ENCODE measurements at regions of chr9 and their contacts with region 1.

Region 1: DNA sequence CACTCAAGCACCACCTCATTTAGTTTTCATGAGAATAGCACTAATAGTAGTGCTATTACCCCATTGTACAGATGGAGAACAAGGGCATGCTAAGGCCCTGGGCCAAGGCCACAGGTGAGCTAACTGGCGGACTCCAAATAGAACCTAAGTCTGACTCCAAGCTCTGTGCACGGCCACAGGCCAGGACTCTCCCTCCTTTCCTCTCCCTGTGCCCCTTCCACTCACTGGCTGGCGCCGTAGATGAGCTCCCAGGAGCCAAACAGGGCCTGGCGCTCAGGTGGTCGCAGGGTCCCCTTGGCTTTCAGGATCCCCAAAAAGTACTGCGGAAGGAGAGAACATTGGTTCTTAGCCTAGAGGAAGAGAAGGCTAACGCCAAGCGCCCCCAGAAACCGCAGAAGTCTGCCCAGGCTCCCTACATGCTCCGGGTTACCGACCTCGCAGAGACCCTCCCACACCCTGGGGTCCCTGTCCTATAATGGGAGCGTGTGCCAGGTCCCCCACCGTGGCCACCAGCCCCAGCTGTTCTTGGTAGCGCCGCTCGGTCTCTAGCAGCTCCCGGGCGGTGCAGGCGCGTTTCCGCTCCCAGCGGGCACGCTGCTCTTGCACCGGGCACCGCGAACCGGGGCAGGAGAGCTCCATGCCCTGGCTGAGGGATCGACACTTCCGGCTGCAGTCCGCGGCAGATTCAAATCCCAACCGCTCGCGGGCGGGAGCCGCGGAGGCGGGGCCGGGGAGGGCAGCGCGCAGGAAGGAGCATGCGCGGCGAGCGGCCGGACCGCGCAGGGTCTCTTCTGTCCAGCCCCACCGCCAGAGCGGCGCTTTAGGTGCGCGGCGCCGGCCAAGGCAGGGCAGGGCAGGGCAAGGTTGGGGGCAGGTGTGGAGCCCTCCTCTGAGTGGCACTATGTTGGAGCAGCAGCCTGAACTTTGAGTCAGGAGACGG is at the start of gene ARHGEF39:
- DNase-seq: peak; percentile 87 to 92 (median 88)
- ATAC-seq: peak; percentile 96
- H3K4me3 ChIP-seq: peak within 1 kb of the TSS; percentile 81
- H3K27ac ChIP-seq: peak within 1 kb of the TSS; percentile 92
- H3K4me1 ChIP-seq: peaks cover 13 to 22% of the 10 kb centered on the region in 2 experiments
- H3K27me3 ChIP-seq: no peaks in the 10 kb centered on the region
- CTCF ChIP-seq: peak; percentile 41 to 49 (median 44); a peak in 4 of 6 replicates
- EP300 ChIP-seq: no peak
- POLR2A ChIP-seq: peak; percentile 83
- RAD21 ChIP-seq: peak in 1 of 2 experiments; percentile 38; a peak in 1 of 4 replicates
- polyA plus RNA-seq, gene ARHGEF39: 2.8 to 5.5 TPM

Region 2: DNA sequence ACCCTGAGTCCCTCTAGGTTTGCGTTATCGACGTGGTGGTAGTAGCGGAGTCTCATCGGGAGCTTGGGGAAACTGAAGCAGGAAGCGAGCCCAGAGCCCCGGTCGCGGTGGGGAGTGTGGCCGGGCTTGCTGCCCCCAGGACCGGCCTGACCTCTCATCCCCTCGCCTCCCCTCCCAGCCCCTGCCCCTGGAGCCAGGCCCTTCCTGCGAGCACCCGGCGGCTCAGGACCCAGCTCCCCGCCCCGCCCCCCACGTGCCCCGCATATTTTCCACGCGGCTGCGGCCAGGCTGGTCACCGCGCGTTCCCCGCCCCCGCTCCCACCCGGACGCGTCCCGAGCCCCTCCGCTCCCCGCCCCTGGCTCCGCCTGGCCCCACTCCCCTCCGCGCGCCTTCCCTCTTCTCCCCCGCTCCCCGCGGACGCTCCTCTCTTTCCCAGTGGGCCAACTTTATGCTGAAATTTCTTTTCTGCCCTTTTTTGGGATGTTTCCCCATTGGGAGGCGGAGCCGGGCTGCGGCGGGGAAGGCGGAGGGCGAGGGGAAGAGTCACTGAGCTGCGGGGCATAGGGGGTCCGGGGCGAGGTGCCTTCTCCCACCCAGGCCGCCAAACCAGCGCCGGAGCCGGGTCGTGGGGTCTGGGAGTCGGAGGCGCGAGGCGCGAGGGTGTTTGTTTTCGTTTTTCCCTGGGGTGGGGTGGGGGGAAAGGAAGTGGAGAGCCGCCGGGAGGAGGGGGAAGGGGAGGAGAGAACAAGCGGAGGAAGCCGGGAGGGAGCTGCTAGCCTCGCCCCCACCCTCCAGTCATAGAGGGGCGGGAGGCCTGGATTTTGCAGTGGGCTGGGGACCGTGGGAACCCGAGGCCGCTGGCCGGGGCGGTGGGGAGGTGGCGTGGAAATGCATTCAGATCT is 25.9 kb after region 1 on chr9:
- CTCF ChIA-PET with region 1: no interaction called
- POLR2A ChIA-PET with region 1: interaction called, 10 read pairs
- in situ Hi-C with region 1: no loop called
- intact Hi-C with region 1: no loop called
- DNase-seq: peak; percentile 78 to 84 (median 78)
- ATAC-seq: peak; percentile 92
- H3K4me3 ChIP-seq: peak overlapping the region; percentile 72
- H3K27ac ChIP-seq: peak overlapping the region; percentile 86
- H3K4me1 ChIP-seq: peaks cover 12 to 23% of the 10 kb centered on the region in 2 experiments; a peak in 4 of 5 replicates
- H3K27me3 ChIP-seq: no peaks in the 10 kb centered on the region
- CTCF ChIP-seq: no peak
- EP300 ChIP-seq: no peak
- POLR2A ChIP-seq: peak; percentile 73
- RAD21 ChIP-seq: no peak

Region 3: DNA sequence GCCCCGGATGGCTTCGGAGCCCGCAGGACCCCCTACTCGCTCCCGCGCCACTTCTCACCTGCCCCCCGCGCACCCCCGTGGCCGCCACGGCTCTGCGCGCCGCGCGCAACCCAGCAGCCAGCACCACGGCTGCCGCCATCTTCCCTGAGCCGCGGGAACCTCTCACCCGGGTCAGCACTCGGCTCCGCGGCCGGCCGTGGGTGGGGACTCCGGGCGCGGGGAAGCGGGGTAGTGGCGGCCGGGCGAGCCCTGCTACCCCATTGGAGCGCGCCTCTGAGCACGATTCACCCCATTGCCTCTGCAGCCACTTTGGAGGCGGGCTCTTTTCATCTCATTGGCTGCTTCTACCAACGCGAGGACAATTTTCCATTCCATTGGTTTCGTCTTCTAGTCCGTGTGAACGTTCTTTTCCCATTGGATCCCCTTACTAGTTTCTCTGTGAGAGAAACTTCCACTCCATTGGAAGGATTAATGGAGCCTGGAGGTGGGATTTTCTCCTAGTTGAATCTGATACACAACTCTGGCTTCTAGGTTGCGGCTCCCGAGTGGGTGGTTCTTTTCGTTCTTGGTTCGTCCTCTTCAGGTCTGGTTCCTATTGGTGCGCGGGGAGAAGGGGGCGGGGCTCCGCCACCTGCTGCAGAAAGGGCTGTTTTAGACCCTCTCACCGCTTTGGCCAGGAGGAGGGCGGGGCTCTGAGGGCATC is 150.2 kb after region 1 on chr9 and contains the start of gene HINT2:
- CTCF ChIA-PET with region 1: no interaction called
- POLR2A ChIA-PET with region 1: interaction called, 4 read pairs
- in situ Hi-C with region 1: no loop called
- intact Hi-C with region 1: loop called (anchors 10 kb)
- DNase-seq: peak; percentile 89 to 96 (median 92)
- ATAC-seq: peak; percentile 92
- H3K4me3 ChIP-seq: peak within 1 kb of the TSS; percentile 66
- H3K27ac ChIP-seq: peak within 1 kb of the TSS; percentile 94
- H3K4me1 ChIP-seq: peaks cover 17 to 31% of the 10 kb centered on the region in 2 experiments
- H3K27me3 ChIP-seq: no peaks in the 10 kb centered on the region
- CTCF ChIP-seq: no peak
- EP300 ChIP-seq: no peak
- POLR2A ChIP-seq: peak; percentile 86
- RAD21 ChIP-seq: no peak
- polyA plus RNA-seq, gene HINT2: 5.6 to 6.2 TPM